ENCODE measurements at regions of chr10 and their contacts with region 1.

Region 1: GRCh38 chr10:22010973-22011408 is 7.5 kb upstream of the DNAJC1 start:
- DNase-seq: no peak
- ATAC-seq: no peak
- H3K4me3 ChIP-seq: no peak overlapping the region
- H3K27ac ChIP-seq: no peak overlapping the region
- H3K4me1 ChIP-seq: peaks cover 0 to 3% (median 0%) of the 10 kb centered on the region in 12 donors
- H3K27me3 ChIP-seq: no peaks in the 10 kb centered on the region
- CTCF ChIP-seq: peak; percentile 42 to 75 (median 62)
- POLR2A ChIP-seq: no peak

Region 2: GRCh38 chr10:22071332-22071731 is 60.3 kb after region 1 on chr10:
- intact Hi-C with region 1: no loop called
- DNase-seq: no peak
- ATAC-seq: no peak
- H3K4me3 ChIP-seq: no peak overlapping the region
- H3K27ac ChIP-seq: no peak overlapping the region
- H3K4me1 ChIP-seq: no peaks in the 10 kb centered on the region
- H3K27me3 ChIP-seq: no peaks in the 10 kb centered on the region
- CTCF ChIP-seq: no peak
- POLR2A ChIP-seq: no peak

Region 3: DNA sequence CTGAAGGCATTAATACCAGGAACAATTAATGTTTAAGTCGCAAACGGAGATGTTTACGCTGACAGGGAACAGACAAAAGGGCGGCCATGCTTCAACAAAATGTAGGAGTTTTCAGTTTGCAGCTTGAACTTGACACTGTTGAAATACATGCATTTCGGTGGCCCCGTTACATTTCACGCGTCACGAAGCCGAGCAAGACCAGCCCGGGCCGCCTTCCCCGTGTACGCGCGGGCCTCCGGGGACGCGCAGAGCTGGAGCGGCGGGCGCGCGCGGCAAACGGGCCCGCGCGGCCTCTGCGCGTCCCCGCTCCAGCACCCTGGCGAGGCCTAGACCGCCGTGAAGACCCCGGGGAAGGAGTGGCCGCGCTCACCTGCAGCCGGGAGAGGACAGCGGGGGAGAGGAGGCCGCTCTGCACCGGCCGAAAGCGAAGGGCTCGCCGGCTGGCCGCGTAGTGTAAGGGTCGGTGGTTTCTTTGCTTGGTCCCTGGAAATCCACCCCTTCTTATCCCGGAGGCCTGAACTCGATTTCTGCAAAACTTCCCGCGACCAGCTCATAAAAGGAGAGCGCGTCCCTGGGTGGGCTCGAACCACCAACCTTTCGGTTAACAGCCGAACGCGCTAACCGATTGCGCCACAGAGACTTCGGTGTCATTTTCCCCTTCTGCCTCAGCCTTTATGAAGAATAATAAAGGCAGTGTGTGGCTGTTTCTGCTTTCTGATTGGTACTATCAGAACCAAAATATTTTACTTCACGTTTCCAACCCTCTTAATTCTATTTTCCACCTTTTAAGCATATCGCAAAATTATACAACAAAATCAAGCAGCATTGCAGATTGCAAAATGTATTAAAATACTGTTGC is 218.2 kb after region 1 on chr10:
- intact Hi-C with region 1: loop called in 3 of 10 experiments (anchors 5 to 10 kb)
- DNase-seq: peak; percentile 85 to 90 (median 88)
- ATAC-seq: peak; percentile 91 to 100 (median 98)
- H3K4me3 ChIP-seq: peak overlapping the region; percentile 57 to 89 (median 77)
- H3K27ac ChIP-seq: peak overlapping the region; percentile 85 to 97 (median 92)
- H3K4me1 ChIP-seq: peaks cover 0 to 9% (median 6%) of the 10 kb centered on the region in 12 donors
- H3K27me3 ChIP-seq: no peaks in the 10 kb centered on the region
- CTCF ChIP-seq: no peak
- POLR2A ChIP-seq: peak in 1 of 2 donors; percentile 56

Region 4: GRCh38 chr10:22427890-22428571 is 417.0 kb after region 1 on chr10:
- intact Hi-C with region 1: loop called in 5 of 10 experiments (anchors 10 kb)
- DNase-seq: no peak
- ATAC-seq: peak in 2 of 4 donors; percentile 33 to 42
- H3K4me3 ChIP-seq: no peak overlapping the region
- H3K27ac ChIP-seq: no peak overlapping the region
- H3K4me1 ChIP-seq: peaks cover 0 to 11% (median 7%) of the 10 kb centered on the region in 12 donors
- H3K27me3 ChIP-seq: peaks cover 0 to 9% (median 0%) of the 10 kb centered on the region in 9 donors
- CTCF ChIP-seq: no peak
- POLR2A ChIP-seq: no peak

Region 5: DNA sequence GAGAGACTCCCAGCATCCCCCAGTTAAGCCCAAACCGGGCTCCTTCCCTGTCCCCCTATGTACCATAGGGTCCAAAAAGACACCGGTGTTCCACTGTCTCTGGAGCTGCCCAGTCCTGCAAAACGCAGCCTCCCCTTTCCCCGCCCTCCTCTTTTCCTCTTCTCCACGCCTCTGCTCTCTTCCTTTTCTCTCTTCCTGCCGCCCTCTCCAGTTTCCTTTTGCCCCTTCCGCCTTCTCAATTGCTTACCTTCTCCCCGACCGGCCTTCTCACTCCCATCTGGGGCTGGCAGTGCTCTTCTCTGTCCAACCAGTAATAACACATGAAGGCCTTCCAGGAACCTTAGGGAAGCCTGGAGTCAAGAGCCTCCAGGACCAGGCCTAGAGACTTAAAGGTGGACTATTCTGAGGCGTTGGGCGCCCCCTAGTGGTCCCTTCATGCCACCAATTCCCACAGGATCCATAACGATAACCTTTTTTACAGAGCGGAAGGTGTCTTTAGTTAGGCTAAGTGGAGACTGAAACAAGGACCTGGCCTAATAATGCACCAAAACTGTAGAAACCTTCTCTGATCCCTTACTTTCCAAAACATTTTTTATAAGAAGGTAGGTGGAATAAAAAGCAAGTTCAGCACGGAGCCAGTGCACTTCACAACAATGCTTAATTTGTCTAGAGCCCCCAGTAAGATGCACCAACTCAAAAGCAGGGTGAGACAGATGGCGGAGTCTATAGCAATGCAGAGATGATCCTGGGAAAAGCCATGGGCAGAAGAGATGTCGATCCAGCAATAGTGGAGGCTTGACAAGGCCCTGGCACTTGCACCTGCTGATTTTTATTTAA is 1057.2 kb after region 1 on chr10:
- intact Hi-C with region 1: loop called in 3 of 10 experiments (anchors 5 to 10 kb)
- DNase-seq: peak; percentile 59 to 83 (median 66)
- ATAC-seq: peak; percentile 25 to 73 (median 68)
- H3K4me3 ChIP-seq: no peak overlapping the region
- H3K27ac ChIP-seq: no peak overlapping the region
- H3K4me1 ChIP-seq: peaks cover 0 to 23% (median 10%) of the 10 kb centered on the region in 12 donors
- H3K27me3 ChIP-seq: no peaks in the 10 kb centered on the region
- CTCF ChIP-seq: peak; percentile 70 to 90 (median 82)
- POLR2A ChIP-seq: no peak

Measured in heart left ventricle (tissue), 16 donors.